Ovary (tissue), 10 donors: ENCODE measurements at regions of chr15 and their contacts with region 1.

Region 1: DNA sequence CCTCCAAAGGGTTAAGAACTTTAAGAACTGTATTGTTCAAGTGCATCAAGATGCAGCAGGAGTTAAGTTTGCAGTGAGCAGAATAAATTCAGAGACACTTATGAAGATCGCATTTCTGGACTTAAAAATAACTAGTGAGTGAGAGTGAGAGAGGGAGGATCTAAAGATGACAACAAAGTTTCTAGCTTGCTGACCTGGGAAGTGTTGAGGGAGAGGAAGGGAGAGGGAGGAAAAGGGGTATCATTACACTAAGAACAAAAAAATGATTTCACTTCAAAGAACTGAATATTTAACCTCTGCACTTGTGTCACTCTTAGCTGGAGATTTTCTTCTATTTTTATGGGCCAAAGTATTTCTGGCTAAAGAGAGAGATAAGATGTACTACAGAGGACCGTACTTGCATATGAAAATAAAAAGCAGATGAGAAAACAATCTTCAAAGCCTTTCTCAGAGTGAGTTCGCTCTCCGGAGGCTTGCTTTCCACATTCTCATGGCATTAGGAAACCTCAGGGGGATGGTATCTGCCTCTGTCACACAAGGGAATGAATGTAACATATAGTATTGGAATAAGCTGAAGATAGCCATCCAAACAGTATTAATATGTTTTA is 91.4 kb upstream of the TJP1 start:
- DNase-seq: peak in 1 of 5 donors; percentile 36
- H3K4me3 ChIP-seq: no peak overlapping the region
- H3K27ac ChIP-seq: no peak overlapping the region
- H3K4me1 ChIP-seq: no peaks in the 10 kb centered on the region
- H3K27me3 ChIP-seq: no peaks in the 10 kb centered on the region
- CTCF ChIP-seq: no peak
- EP300 ChIP-seq: no peak
- POLR2A ChIP-seq: no peak

Region 2: DNA sequence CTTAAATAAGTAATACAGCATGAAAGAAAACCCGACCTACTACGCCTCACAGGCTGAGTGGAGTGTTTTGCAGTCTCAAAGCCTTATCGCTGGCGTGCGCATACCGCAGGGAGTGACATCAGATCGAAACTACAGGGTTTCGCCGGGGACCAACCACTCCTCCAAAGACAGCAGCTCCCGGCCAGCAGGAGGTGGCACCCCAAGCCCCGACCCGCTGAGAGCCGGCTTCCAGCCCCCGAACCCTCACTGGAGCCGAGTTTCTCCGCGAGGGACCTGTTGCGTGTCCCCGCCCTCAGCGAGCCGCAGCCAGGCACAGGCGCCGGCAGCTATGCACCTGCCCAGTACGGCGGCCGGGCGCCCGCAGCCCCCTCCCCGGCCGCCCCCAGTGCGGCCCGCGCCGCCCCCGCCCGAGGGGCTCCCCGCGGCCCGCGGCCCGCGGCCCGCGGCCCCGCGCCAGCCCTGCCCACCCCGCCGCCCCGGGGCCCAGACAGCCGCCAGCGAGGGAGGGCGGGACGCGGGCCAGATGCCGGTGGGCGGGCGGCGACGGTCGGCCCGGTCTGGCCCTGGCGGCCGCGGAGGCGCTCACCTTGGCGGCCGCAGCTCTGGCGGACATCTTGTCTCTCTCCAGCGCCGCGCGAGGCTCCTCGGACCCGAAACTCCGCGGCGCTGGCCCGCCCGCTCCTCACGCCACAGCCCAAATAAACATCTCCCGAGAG is 92.1 kb before region 1 on chr15:
- intact Hi-C with region 1: loop called in 1 of 4 experiments (anchors 5 kb)
- DNase-seq: peak; percentile 63 to 71 (median 66)
- H3K4me3 ChIP-seq: peak overlapping the region; percentile 95
- H3K27ac ChIP-seq: peak overlapping the region; percentile 90 to 92
- H3K4me1 ChIP-seq: peaks cover 5% of the 10 kb centered on the region
- H3K27me3 ChIP-seq: no peaks in the 10 kb centered on the region
- CTCF ChIP-seq: peak in 1 of 3 donors; percentile 20
- EP300 ChIP-seq: no peak
- POLR2A ChIP-seq: no peak

Region 3: DNA sequence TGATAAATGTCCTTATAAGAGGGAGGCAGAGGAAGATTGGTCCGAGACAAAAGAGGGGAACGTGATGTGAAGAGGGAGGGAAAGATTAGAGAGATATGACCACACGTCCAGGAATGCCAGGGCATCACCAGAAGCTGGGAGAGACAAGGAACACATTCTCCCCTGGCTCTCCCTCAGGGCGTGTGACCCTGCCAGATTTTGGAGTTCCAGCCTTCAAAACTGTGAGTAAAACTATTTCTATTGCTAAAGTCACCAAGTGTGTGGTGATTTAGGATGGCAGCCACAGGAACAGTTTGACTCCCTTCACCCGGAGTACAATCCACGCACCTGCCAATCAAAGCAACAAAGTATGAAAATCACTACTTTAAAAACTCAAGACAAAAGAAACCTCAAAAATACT is 59.2 kb before region 1 on chr15:
- intact Hi-C with region 1: no loop called
- DNase-seq: no peak
- H3K4me3 ChIP-seq: no peak overlapping the region
- H3K27ac ChIP-seq: no peak overlapping the region
- H3K4me1 ChIP-seq: peaks cover 2% of the 10 kb centered on the region
- H3K27me3 ChIP-seq: no peaks in the 10 kb centered on the region
- CTCF ChIP-seq: no peak
- EP300 ChIP-seq: no peak
- POLR2A ChIP-seq: no peak

Region 4: GRCh38 chr15:29870495-29871151 is 43.0 kb before region 1 on chr15:
- intact Hi-C with region 1: loop called in 1 of 4 experiments (anchors 1 kb)
- DNase-seq: peak; percentile 56 to 83 (median 64)
- H3K4me3 ChIP-seq: peak overlapping the region; percentile 1
- H3K27ac ChIP-seq: peak overlapping the region in 1 of 2 donors; percentile 18
- H3K4me1 ChIP-seq: peaks cover 5% of the 10 kb centered on the region
- H3K27me3 ChIP-seq: no peaks in the 10 kb centered on the region
- CTCF ChIP-seq: no peak
- EP300 ChIP-seq: no peak
- POLR2A ChIP-seq: no peak

Region 5: GRCh38 chr15:29978411-29979382 is 65.1 kb after region 1 on chr15:
- intact Hi-C with region 1: loop called in 1 of 4 experiments (anchors 10 kb)
- DNase-seq: peak in 2 of 5 donors; percentile 14 to 35
- H3K4me3 ChIP-seq: no peak overlapping the region
- H3K27ac ChIP-seq: no peak overlapping the region
- H3K4me1 ChIP-seq: no peaks in the 10 kb centered on the region
- H3K27me3 ChIP-seq: no peaks in the 10 kb centered on the region
- CTCF ChIP-seq: peak in 1 of 3 donors; percentile 89
- EP300 ChIP-seq: no peak
- POLR2A ChIP-seq: no peak